ENCODE measurements at regions of chr7 and their contacts with region 1.

Region 1: DNA sequence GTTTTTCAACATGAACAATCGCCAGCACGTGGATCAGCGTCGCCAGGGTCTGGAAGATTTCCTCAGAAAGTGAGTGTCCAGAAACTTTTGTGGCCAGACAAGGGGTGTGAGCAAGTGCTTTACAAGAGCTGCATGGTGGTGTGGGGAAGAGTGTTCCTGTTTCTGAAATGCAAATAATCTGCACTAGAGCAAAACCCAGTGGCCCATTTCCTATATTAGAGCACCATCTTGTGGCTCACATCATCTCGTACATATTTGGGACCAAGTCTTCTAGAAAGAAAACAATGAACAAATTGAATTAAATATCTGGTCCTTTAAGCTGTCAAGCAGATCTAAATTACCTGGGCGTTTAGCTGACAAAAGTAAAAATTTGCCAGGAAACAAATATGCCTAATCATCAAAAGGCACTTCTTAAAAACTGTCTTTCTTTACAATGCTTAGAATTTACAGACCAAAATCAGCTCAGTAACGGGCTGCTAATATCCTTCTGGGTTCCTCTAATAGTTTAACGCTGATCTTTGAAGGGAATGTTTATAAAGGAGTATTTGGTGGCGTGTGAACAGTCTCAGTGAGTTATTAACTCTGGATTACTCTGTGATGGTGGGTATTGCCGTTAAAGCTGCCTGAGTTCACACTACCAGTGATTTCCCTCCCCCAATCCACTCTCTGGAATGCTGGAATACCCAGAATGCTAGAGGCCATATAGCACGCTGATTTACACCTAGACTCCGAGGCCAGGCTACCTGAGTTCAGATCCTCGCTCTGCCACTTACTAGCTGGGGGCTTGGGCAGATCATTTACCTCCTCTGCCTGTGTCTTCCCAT is 73.6 kb downstream of the SNX10 start:
- DNase-seq: peak; percentile 32 to 41
- ATAC-seq: peak; percentile 87

Region 2: DNA sequence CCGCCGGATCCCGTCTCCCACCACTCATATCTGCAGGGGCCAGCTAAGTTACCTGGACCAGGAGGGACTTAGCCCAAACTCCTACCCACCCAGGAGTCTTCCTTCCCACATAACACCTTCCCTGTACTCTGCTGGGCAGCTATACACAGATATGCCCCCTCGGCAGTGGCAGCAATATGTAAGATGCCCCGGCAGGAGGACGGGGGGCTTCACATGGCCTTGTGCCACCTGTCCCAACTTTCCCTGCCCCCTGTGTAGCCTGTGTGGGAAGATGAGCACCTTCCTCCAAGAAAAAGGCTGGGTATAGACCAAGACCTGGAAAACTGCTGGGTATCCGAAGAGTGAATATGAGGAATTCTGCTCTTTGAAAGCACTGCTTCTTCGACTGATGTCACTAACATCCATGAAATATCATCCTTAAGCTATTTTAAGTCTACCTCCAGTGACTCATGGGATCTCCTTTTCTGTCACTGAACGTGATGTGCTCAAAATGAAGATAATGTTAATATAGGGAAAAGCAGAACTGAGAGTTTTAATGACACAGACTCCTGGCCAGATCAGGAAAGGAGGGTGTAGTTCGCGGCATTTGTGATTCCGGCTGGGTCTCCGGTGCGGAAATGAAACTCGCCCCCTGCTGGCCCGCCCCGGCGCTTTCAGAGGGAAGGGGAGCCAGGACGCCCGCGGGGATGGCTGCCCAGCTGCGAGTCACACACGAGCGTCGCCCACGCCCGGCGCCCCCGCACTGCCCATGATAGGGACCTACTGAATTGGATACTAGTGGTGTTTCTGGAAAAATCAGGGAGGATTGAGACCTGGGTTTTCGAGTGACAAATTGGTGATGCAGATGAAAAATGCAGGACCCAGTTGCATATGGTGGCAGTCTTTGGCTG is 470.1 kb before region 1 on chr7:
- intact Hi-C with region 1: loop called in 1 of 2 experiments (anchors 1 kb)
- DNase-seq: peak; percentile 70 to 83
- ATAC-seq: peak; percentile 75

Region 3: GRCh38 chr7:26083113-26083512 is 282.2 kb before region 1 on chr7:
- intact Hi-C with region 1: loop called in 1 of 2 experiments (anchors 5 kb)
- DNase-seq: no peak
- ATAC-seq: no peak

Region 4: GRCh38 chr7:26667500-26668133 is 302.3 kb after region 1 on chr7:
- intact Hi-C with region 1: loop called (anchors 5 to 10 kb)
- DNase-seq: peak; percentile 47 to 75
- ATAC-seq: peak; percentile 97

Region 5: GRCh38 chr7:27160546-27161213 is 795.4 kb after region 1 on chr7:
- intact Hi-C with region 1: loop called in 1 of 2 experiments (anchors 5 kb)
- DNase-seq: peak; percentile 83 to 94
- ATAC-seq: peak; percentile 30